BJ (cell line): ENCODE measurements at regions of chr3 and their contacts with region 1.

Region 1: GRCh38 chr3:187197057-187197649 is at the start of gene RTP1:
- DNase-seq: no peak
- H3K4me3 ChIP-seq: no peak within 1 kb of the TSS
- H3K27me3 ChIP-seq: no peaks in the 10 kb centered on the region
- CTCF ChIP-seq: no peak
- polyA plus RNA-seq, gene RTP1: not detected in 2 replicates

Region 2: DNA sequence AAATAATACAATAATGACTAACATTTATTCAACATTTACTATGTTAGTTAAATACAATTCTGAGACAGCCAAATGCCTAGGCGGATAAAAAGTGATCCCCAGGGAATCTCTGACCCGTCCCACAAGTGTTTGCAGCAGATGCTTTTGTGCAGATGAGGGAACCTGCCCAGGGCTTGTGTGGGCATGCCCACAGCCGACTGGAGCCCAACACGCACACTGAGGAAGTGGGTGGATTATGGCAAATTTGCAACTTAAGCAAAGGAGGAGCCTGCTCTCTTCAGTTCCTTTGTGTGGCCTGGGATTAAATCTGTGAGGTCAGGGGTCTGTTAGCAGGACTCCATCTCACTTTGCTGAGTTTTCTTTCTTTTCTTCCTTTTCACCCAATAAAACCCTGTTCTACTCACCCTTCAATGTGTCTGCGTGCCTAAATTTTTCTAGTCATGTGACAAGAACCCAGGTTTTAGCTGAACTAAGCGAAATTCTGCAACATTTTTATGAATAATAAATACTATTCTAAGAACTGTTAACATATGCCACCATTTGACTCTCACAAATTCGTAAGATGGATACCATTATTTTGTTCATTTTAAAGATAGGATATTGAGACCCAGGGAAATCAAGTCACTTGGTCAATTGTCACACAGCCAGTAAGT is 13.8 kb before region 1 on chr3:
- CTCF ChIA-PET with region 1: interaction called, 4 read pairs
- POLR2A ChIA-PET with region 1: interaction called, 10 read pairs
- DNase-seq: no peak
- H3K4me3 ChIP-seq: no peak overlapping the region
- H3K27me3 ChIP-seq: no peaks in the 10 kb centered on the region
- CTCF ChIP-seq: no peak